ENCODE measurements at regions of chr1 and their contacts with region 1.

Region 1: GRCh38 chr1:205335643-205336091 is 14.1 kb upstream of the NUAK2 start:
- DNase-seq: no peak
- H3K4me3 ChIP-seq: no peak overlapping the region
- CTCF ChIP-seq: peak; percentile 99

Region 2: DNA sequence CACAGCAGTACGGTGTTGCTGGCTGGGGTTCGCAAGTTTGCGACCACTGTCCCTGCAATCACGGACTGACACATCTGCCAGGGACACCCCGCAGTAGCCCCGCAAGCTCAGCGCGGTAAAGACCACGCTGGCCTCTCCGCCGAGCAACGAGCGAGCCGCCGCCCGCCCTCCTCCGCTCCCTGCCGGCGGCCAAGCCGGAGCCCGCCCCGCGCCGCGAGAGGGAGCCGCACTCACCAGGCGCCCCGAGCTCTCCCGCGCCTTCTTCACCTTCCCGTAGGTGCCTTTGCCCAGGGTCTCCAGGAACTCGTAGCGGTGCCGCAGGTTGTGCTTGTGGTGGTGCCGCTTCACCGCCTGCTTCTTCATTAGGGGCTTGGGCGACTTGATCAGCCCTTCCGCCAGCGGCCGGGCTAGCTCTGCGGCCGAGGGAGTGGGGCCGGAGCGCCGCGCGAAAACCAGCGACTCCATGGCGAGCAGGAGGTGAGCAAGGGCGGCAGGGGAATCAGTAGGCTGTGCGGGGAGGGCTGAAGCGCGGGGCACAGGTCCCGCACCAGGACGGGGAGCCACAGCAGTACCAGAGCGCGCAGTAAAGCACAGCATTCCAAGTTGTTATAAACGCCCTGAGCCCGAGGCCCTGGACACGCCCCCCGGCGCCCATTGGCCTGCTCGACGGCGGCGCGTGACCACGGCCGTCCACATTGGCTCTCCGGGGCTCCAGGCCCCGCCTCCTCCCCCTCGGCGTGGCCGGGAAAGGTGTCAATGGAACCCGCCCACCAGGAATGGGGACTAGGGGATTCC is 14.3 kb before region 1 on chr1 and contains the start of gene NUAK2:
- CTCF ChIA-PET with region 1: interaction called, 155 read pairs
- POLR2A ChIA-PET with region 1: no interaction called
- DNase-seq: no peak
- H3K4me3 ChIP-seq: peak within 1 kb of the TSS; percentile 98
- CTCF ChIP-seq: peak; percentile 48